Breast epithelium (tissue), 4 donors: ENCODE measurements at regions of chr9 and their contacts with region 1.

Region 1: GRCh38 chr9:4762108-4762885 is 21.3 kb upstream of the AK3 start:
- DNase-seq: peak; percentile 42 to 76
- H3K4me3 ChIP-seq: peak overlapping the region in 2 of 3 donors; percentile 7 to 45
- H3K27ac ChIP-seq: peak overlapping the region in 1 of 2 donors; percentile 66
- H3K4me1 ChIP-seq: peaks cover 0 to 2% of the 10 kb centered on the region in 2 donors
- H3K27me3 ChIP-seq: no peaks in the 10 kb centered on the region
- CTCF ChIP-seq: peak; percentile 79 to 83 (median 81)
- POLR2A ChIP-seq: no peak

Region 2: GRCh38 chr9:4984621-4985385 is 222.5 kb after region 1 on chr9 and contains the start of gene JAK2:
- intact Hi-C with region 1: loop called (anchors 10 kb)
- DNase-seq: peak; percentile 90 to 91
- H3K4me3 ChIP-seq: peak within 1 kb of the TSS; percentile 93 to 98 (median 96)
- H3K27ac ChIP-seq: peak within 1 kb of the TSS; percentile 95 to 100
- H3K4me1 ChIP-seq: peaks cover 0 to 9% of the 10 kb centered on the region in 2 donors
- H3K27me3 ChIP-seq: no peaks in the 10 kb centered on the region
- CTCF ChIP-seq: no peak
- POLR2A ChIP-seq: peak; percentile 15
- total RNA-seq, gene JAK2: 28.8 to 46.9 (median 35.4) TPM